ENCODE measurements at regions of chr2 and their contacts with region 1.

Region 1: GRCh38 chr2:71460595-71461303 is 7.4 kb downstream of the DYSF start:
- DNase-seq: no peak
- H3K4me3 ChIP-seq: no peak overlapping the region
- CTCF ChIP-seq: peak; percentile 37

Region 2: DNA sequence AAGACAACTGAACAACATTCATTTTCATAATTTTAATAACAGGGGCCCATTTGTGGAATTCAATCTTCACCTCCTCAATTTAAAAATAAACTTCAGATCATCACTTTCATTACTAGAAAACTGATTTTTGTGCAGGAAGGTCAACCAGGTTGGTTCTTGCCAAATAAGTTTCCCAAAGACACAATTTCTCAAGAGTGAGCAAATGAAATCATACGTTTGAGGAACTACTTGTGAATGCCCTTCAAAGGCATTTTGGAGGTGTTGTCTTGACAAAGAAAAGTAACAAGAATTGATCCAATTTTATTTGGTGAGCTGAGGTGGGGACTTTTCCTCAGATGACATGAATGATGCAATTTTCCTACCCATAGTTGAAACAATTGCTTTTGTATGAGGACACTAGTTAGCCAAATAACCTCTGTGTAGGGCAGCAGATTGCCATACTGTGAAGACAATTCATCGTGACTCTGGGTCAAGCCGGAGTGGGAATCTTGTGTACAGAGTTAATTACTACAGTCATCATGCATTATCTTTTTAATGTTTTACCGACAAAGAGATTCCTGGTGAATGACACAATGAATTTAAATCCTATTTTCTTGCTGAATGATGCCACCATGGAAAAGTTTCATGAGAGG is 1028.9 kb before region 1 on chr2:
- CTCF ChIA-PET with region 1: no interaction called
- POLR2A ChIA-PET with region 1: no interaction called
- DNase-seq: no peak
- H3K4me3 ChIP-seq: no peak overlapping the region
- CTCF ChIP-seq: no peak

Region 3: DNA sequence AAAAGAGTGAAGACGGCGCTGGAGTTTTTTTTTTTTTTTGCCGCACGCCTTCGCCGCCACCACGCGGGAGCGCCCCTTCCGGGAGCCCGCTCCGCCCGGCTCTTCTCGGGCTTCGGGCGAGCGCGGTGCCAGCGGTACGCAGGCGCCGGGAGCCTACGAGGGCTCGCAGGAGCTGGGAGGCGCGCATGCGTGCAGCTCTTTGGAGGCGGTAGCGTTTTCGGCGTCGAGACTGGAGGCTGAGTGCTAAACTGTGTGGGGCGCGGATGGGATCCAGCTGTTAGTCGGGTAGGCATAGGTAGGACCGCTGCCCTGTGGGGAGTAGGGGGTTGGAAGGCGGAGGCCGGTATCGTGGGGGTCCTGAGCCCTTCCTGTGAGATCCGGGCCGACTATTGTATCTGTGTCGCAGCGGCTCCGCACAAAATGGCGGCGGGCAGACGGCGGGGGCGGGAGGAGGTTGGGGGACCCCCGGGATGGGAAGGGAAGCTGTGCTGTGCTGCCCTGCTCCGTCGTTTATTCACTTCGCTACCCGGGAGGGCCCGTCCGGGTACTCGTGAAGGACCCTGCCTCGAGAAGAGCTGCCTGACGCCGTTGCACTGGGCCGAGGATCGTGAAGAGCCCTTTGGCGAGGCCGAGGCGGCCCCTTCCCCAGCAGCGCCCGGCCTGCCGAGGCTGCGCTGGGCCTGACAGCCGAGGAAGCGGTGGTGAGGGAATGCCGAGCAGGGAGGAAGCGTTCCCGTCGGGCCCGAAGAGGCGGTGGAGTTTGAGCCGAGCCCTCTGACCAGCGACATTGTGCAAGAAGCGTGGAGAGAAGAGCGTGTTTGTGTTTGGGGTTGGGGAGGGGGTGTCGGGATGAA is 128.9 kb before region 1 on chr2 and contains the start of gene ZNF638:
- CTCF ChIA-PET with region 1: interaction called, 16 read pairs
- POLR2A ChIA-PET with region 1: interaction called, 5 read pairs
- DNase-seq: peak; percentile 16
- H3K4me3 ChIP-seq: peak within 1 kb of the TSS; percentile 99
- CTCF ChIP-seq: peak; percentile 62

Region 4: DNA sequence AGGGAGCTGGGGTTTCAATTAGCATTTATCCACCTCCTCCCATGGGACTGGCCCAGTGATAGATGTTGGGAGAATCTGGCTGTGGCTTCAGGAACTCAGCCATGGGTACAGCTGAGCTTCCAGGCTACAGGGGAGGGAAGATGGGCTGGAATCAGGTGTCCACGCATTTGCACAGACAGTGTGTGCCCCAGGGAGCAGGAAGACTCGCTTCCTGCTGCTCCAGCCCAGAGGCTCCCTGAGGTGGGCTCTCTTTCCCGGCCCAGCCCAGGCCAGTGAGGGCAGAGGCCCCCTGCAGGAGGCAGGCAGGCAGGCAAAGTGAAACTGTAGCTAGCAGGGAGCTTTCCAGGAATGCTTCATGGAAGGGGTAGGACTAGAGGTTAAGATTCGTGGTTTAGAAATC is 21.3 kb after region 1 on chr2:
- CTCF ChIA-PET with region 1: interaction called, 11 read pairs
- POLR2A ChIA-PET with region 1: no interaction called
- DNase-seq: no peak
- H3K4me3 ChIP-seq: no peak overlapping the region
- CTCF ChIP-seq: peak; percentile 31

Region 5: DNA sequence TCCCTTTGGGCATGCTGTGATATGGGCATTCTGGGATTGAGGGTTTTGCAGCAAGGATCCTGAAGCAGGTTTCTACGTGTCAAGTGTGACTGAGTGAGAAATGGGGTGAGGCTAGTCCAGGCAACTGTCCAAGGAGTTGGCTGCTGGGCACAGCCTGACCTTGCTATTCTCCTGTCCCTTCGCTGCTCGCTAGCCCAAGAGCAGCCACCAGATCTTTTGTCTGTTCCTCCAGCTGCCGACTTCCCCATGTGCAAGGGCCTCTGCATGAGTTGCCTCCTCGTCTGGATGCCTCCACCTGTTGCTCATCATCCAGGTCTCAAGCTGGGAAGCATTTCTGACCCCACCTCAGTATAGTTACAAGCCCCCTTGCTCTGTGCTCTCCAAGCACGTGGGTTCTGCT is 63.7 kb after region 1 on chr2:
- CTCF ChIA-PET with region 1: interaction called, 15 read pairs
- POLR2A ChIA-PET with region 1: no interaction called
- DNase-seq: no peak
- H3K4me3 ChIP-seq: no peak overlapping the region
- CTCF ChIP-seq: no peak